A549 (cell line): ENCODE measurements at regions of chr19 and their contacts with region 1.

Region 1: GRCh38 chr19:44954824-44955586 is at the start of gene CLPTM1:
- DNase-seq: peak; percentile 99 to 100
- ATAC-seq: peak; percentile 91 to 95
- H3K4me3 ChIP-seq: peak within 1 kb of the TSS; percentile 98
- H3K27ac ChIP-seq: peak within 1 kb of the TSS; percentile 90 to 91
- H3K4me1 ChIP-seq: peaks cover 23% of the 10 kb centered on the region
- CTCF ChIP-seq: no peak
- EP300 ChIP-seq: no peak
- POLR2A ChIP-seq: peak; percentile 76
- RAD21 ChIP-seq: no peak
- polyA plus RNA-seq, gene CLPTM1: 96.5 and 99.3 TPM in 2 replicates

Region 2: GRCh38 chr19:44789943-44790483 is 165.0 kb before region 1 on chr19:
- CTCF ChIA-PET with region 1: interaction called, 12 read pairs
- POLR2A ChIA-PET with region 1: no interaction called
- DNase-seq: no peak
- ATAC-seq: no peak
- H3K4me3 ChIP-seq: no peak overlapping the region
- H3K27ac ChIP-seq: no peak overlapping the region
- H3K4me1 ChIP-seq: no peaks in the 10 kb centered on the region
- CTCF ChIP-seq: no peak
- EP300 ChIP-seq: no peak
- POLR2A ChIP-seq: no peak
- RAD21 ChIP-seq: no peak

Region 3: DNA sequence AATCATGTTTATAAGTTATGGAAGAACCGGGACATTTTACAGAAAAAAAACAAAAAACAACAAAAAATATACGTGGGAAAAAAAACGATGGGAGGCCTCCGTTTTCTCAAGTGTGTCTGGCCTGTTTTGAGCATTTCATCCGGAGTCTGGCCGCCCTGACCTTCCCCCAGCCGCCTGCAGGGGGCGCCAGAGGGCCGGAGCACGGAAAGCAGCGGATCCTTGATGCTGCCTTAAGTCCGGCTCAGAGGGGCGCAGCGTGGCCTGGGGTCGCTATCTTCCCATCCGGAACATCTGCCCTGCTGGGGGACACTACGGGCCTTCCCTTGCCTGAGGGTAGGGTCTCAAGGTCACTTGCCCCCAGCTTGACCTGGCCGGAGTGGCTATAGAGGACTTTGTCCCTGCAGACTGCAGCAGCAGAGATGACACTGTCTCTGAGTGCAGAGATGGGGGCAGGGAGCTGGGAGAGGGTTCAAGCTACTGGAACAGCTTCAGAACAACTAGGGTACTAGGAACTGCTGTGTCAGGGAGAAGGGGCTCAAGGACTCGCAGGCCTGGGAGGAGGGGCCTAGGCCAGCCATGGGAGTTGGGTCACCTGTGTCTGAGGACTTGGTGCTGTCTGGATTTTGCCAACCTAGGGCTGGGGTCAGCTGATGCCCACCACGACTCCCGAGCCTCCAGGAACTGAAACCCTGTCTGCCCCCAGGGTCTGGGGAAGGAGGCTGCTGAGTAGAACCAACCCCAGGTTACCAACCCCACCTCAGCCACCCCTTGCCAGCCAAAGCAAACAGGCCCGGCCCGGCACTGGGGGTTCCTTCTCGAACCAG is 51.2 kb before region 1 on chr19:
- CTCF ChIA-PET with region 1: interaction called, 303 read pairs
- POLR2A ChIA-PET with region 1: interaction called, 6 read pairs
- DNase-seq: peak; percentile 79 to 84
- ATAC-seq: peak; percentile 54 to 68
- H3K4me3 ChIP-seq: no peak overlapping the region
- H3K27ac ChIP-seq: peak overlapping the region in 1 of 2 experiments; percentile 56; a peak in 3 of 6 replicates
- H3K4me1 ChIP-seq: peaks cover 29% of the 10 kb centered on the region
- CTCF ChIP-seq: peak; percentile 98
- EP300 ChIP-seq: no peak
- POLR2A ChIP-seq: no peak
- RAD21 ChIP-seq: peak; percentile 85 to 89

Region 4: GRCh38 chr19:44943801-44944249 is 11.2 kb before region 1 on chr19:
- CTCF ChIA-PET with region 1: interaction called, 19 read pairs
- POLR2A ChIA-PET with region 1: interaction called, 6 read pairs
- DNase-seq: no peak
- ATAC-seq: peak in 1 of 2 experiments; percentile 29; a peak in 3 of 6 replicates
- H3K4me3 ChIP-seq: no peak overlapping the region
- H3K27ac ChIP-seq: no peak overlapping the region
- H3K4me1 ChIP-seq: no peaks in the 10 kb centered on the region
- CTCF ChIP-seq: no peak
- EP300 ChIP-seq: no peak
- POLR2A ChIP-seq: no peak
- RAD21 ChIP-seq: no peak

Region 5: DNA sequence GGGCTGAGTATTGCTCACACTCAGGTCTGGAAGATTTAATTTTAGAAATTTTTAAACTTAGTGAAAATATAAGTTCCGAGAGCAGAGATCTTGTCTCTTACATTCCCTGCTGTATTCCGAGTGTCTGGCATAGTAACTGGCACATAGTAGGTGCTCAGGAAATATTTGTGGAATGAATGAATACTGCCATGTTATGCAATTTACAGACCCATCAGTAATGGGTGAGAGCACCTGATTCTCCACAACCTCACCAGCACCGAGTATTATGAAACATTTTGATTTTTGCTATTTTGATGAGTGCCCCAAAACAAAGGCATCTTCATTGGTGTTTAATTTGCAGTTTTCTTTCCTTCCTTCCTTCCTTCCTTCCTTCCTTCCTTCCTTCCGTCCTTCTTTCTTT is 68.0 kb after region 1 on chr19:
- CTCF ChIA-PET with region 1: no interaction called
- POLR2A ChIA-PET with region 1: no interaction called
- DNase-seq: no peak
- ATAC-seq: no peak
- H3K4me3 ChIP-seq: no peak overlapping the region
- H3K27ac ChIP-seq: no peak overlapping the region
- H3K4me1 ChIP-seq: no peaks in the 10 kb centered on the region
- CTCF ChIP-seq: no peak
- EP300 ChIP-seq: no peak
- POLR2A ChIP-seq: no peak
- RAD21 ChIP-seq: no peak

Region 6: DNA sequence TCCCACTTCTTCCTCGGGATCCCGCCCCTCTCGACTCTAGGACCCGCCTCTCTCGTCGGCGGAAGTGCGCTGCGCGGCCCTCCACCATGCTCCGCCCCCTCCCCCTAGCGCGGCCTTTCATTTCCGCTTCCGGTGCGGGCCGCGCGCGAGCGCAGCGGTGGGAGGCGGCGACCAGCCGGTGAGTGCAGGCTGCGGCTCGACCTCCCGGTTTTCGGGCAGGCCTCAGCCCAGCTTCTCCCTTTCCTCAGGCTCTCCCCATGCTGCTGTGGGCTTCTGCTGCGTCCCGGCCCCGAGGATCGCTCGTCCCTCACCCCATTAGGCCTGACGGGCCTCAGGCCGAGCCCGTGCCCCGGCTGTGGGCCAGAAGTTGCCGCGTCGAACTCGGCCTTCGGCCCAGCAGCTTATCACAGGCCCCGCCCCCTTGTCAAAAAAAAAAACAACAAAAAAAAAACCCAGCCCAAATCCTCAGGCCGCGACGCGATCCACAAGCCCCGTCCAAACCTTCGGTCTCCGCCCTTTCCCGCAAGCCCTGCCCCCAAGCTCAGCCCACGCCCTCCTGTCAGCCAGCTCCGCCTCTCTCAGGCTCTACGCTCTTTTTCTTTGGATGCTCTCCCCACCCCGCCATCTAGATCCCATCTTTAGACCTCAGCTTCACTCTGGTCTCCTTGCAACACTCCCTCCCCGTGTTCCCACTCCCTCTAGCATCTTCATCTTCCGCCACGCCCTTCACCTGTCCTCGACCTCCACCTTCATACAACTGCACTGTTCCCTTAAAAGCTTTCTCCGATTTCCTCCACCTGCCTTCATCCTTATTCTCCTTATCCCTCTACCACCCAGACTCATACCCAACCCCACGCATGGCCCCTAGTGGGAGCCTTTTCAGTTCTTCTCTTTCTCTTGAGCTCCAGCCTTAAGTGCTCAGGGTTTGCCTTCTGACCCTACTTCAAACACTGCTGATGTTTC is 84.2 kb after region 1 on chr19 and contains the start of gene CLASRP:
- CTCF ChIA-PET with region 1: interaction called, 3 read pairs
- POLR2A ChIA-PET with region 1: interaction called, 12 read pairs
- DNase-seq: peak; percentile 90 to 92
- ATAC-seq: peak; percentile 99
- H3K4me3 ChIP-seq: peak within 1 kb of the TSS; percentile 72
- H3K27ac ChIP-seq: peak within 1 kb of the TSS; percentile 85 to 90
- H3K4me1 ChIP-seq: peaks cover 11% of the 10 kb centered on the region
- CTCF ChIP-seq: no peak
- EP300 ChIP-seq: no peak
- POLR2A ChIP-seq: peak; percentile 92
- RAD21 ChIP-seq: no peak
- polyA plus RNA-seq, gene CLASRP: 30.7 and 39.0 TPM in 2 replicates